CD4-positive, alpha-beta memory T cell (primary cell): ENCODE measurements at regions of chr11 and their contacts with region 1.

Region 1: GRCh38 chr11:128831174-128832120 is 35.6 kb downstream of the KCNJ1 start:
- DNase-seq: peak; percentile 79 to 85 (median 83)
- H3K4me3 ChIP-seq: peak overlapping the region in 1 of 2 donors; percentile 12
- H3K4me3 Mint-ChIP-seq: peak overlapping the region; percentile 46 to 91 (median 82)
- H3K27ac ChIP-seq: peak overlapping the region; percentile 76
- H3K27ac Mint-ChIP-seq: peak overlapping the region; percentile 86 to 98 (median 97)
- H3K4me1 ChIP-seq: peaks cover 24% of the 10 kb centered on the region
- H3K4me1 Mint-ChIP-seq: peaks cover 21 to 49% (median 36%) of the 10 kb centered on the region in 4 donors
- H3K27me3 ChIP-seq: no peaks in the 10 kb centered on the region
- H3K27me3 Mint-ChIP-seq: no peaks in the 10 kb centered on the region

Region 2: DNA sequence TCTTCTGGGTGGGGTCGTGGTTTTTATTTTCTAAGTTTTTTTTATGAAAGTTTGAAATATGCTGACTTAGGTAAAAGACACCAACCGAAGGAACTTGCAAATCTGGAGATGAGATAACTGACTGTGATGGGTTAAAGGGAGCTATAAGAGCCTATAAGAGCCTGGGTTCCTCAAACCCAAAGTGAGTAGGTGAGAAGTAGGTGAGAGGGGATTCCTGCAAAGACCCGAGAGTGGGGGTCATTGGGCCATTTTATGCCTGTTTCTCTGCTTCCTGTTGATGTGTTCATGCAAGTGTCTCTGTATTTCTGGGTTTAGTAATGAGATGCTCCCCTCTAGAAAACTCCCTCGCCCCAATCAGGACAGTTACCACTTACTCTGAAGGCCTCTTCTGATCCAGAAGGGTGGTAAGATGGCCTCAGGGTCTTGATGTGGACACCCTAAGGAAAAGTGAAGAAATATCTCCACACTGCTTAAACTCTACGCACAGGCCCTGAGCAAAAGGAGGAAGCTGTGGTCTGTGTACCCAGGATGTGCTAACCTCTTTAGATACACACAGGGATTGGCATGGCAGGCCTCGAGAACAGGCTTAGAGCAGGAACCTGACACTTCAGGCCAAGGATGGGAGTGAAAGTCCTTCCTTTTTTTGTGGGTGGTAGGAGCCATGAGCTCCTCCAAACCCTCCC is 135.8 kb before region 1 on chr11:
- CTCF ChIA-PET with region 1: interaction called, 3 read pairs
- POLR2A ChIA-PET with region 1: interaction called, 7 read pairs
- intact Hi-C with region 1: loop called (anchors 2 kb)
- DNase-seq: peak; percentile 51 to 73 (median 64)
- H3K4me3 ChIP-seq: peak overlapping the region; percentile 77 to 79
- H3K4me3 Mint-ChIP-seq: peak overlapping the region; percentile 94 to 99 (median 96)
- H3K27ac ChIP-seq: peak overlapping the region; percentile 77
- H3K27ac Mint-ChIP-seq: peak overlapping the region; percentile 95 to 99 (median 96)
- H3K4me1 ChIP-seq: peaks cover 59% of the 10 kb centered on the region
- H3K4me1 Mint-ChIP-seq: peaks cover 44 to 84% (median 56%) of the 10 kb centered on the region in 4 donors
- H3K27me3 ChIP-seq: no peaks in the 10 kb centered on the region
- H3K27me3 Mint-ChIP-seq: peaks cover 0 to 6% of the 10 kb centered on the region in 2 donors

Region 3: GRCh38 chr11:128784059-128784804 is 47.2 kb before region 1 on chr11:
- CTCF ChIA-PET with region 1: interaction called, 13 read pairs
- POLR2A ChIA-PET with region 1: interaction called, 8 read pairs
- intact Hi-C with region 1: no loop called
- DNase-seq: no peak
- H3K4me3 ChIP-seq: no peak overlapping the region
- H3K4me3 Mint-ChIP-seq: peak overlapping the region in 3 of 8 donors; percentile 4 to 44 (median 32)
- H3K27ac ChIP-seq: no peak overlapping the region
- H3K27ac Mint-ChIP-seq: peak overlapping the region; percentile 15 to 92 (median 71)
- H3K4me1 ChIP-seq: peaks cover 35% of the 10 kb centered on the region
- H3K4me1 Mint-ChIP-seq: peaks cover 45 to 64% (median 54%) of the 10 kb centered on the region in 4 donors
- H3K27me3 ChIP-seq: no peaks in the 10 kb centered on the region
- H3K27me3 Mint-ChIP-seq: no peaks in the 10 kb centered on the region

Region 4: GRCh38 chr11:128841461-128842072 is 10.1 kb after region 1 on chr11:
- CTCF ChIA-PET with region 1: interaction called, 145 read pairs
- POLR2A ChIA-PET with region 1: interaction called, 27 read pairs
- intact Hi-C with region 1: no loop called
- DNase-seq: peak in 4 of 5 donors; percentile 35 to 48 (median 40)
- H3K4me3 ChIP-seq: no peak overlapping the region
- H3K4me3 Mint-ChIP-seq: peak overlapping the region in 7 of 8 donors; percentile 25 to 75 (median 59)
- H3K27ac ChIP-seq: no peak overlapping the region
- H3K27ac Mint-ChIP-seq: peak overlapping the region; percentile 86 to 95 (median 87)
- H3K4me1 ChIP-seq: peaks cover 99% of the 10 kb centered on the region
- H3K4me1 Mint-ChIP-seq: peaks cover 72 to 100% (median 90%) of the 10 kb centered on the region in 4 donors
- H3K27me3 ChIP-seq: no peaks in the 10 kb centered on the region
- H3K27me3 Mint-ChIP-seq: no peaks in the 10 kb centered on the region

Region 5: DNA sequence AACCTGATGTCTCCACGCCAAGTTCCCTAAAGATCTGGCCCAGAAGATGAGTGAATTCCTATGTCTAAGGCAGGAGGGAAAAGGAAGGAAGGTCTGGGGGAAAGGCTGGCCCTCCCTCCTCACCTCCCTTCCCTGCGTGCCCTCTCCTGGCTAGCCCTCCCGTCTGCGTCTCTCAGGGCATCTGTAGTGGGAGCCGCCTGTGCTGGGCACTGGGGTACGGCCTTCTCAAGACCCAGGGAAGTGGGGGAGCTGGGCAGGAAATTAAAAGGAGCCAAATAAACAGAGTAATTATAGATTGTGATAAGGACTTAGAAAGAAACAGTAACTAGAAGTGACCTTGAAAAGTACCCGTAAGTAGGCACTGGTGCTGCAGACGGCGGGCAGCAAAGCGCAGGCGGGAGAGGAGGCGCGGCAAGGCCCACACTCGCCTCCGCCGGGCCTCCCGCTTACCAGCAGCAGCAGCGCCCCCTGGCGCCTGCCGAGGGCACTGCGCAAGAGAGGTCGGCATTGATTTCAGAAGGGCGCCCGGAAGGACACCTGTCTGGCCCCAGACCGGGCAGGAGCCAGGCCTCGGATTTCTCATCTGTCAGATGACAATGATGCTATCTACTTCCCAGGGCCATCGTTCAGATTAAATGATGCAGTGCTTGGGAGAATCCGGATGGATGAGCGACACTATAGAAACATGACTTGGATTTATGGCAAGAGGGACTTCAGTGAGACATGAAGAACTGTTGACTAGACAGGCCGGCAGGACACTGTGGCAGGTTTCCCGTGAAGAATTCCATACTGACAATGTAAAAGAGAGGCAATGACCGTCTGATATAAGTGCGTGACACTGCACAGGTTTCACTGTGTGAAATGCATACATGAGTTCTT is 28.4 kb after region 1 on chr11:
- CTCF ChIA-PET with region 1: interaction called, 58 read pairs
- POLR2A ChIA-PET with region 1: no interaction called
- intact Hi-C with region 1: loop called (anchors 1 kb)
- DNase-seq: peak; percentile 66 to 76 (median 73)
- H3K4me3 ChIP-seq: no peak overlapping the region
- H3K4me3 Mint-ChIP-seq: peak overlapping the region in 2 of 8 donors; percentile 14 to 32
- H3K27ac ChIP-seq: no peak overlapping the region
- H3K27ac Mint-ChIP-seq: peak overlapping the region in 2 of 7 donors; percentile 14 to 71
- H3K4me1 ChIP-seq: no peaks in the 10 kb centered on the region
- H3K4me1 Mint-ChIP-seq: peaks cover 4 to 11% (median 7%) of the 10 kb centered on the region in 4 donors
- H3K27me3 ChIP-seq: no peaks in the 10 kb centered on the region
- H3K27me3 Mint-ChIP-seq: peaks cover 0 to 2% of the 10 kb centered on the region in 2 donors